ENCODE measurements at regions of chr9 and their contacts with region 1.

Region 1: DNA sequence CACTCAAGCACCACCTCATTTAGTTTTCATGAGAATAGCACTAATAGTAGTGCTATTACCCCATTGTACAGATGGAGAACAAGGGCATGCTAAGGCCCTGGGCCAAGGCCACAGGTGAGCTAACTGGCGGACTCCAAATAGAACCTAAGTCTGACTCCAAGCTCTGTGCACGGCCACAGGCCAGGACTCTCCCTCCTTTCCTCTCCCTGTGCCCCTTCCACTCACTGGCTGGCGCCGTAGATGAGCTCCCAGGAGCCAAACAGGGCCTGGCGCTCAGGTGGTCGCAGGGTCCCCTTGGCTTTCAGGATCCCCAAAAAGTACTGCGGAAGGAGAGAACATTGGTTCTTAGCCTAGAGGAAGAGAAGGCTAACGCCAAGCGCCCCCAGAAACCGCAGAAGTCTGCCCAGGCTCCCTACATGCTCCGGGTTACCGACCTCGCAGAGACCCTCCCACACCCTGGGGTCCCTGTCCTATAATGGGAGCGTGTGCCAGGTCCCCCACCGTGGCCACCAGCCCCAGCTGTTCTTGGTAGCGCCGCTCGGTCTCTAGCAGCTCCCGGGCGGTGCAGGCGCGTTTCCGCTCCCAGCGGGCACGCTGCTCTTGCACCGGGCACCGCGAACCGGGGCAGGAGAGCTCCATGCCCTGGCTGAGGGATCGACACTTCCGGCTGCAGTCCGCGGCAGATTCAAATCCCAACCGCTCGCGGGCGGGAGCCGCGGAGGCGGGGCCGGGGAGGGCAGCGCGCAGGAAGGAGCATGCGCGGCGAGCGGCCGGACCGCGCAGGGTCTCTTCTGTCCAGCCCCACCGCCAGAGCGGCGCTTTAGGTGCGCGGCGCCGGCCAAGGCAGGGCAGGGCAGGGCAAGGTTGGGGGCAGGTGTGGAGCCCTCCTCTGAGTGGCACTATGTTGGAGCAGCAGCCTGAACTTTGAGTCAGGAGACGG is at the start of gene ARHGEF39:
- DNase-seq: peak; percentile 84 to 93 (median 93)
- ATAC-seq: peak; percentile 86 to 88
- H3K4me3 ChIP-seq: peak within 1 kb of the TSS; percentile 48
- H3K27ac ChIP-seq: peak within 1 kb of the TSS; percentile 29
- H3K4me1 ChIP-seq: no peaks in the 10 kb centered on the region
- H3K27me3 ChIP-seq: no peaks in the 10 kb centered on the region
- total RNA-seq, gene ARHGEF39: 0.29 to 0.50 (median 0.34) TPM in 3 of 4 donors, not detected in the other

Region 2: DNA sequence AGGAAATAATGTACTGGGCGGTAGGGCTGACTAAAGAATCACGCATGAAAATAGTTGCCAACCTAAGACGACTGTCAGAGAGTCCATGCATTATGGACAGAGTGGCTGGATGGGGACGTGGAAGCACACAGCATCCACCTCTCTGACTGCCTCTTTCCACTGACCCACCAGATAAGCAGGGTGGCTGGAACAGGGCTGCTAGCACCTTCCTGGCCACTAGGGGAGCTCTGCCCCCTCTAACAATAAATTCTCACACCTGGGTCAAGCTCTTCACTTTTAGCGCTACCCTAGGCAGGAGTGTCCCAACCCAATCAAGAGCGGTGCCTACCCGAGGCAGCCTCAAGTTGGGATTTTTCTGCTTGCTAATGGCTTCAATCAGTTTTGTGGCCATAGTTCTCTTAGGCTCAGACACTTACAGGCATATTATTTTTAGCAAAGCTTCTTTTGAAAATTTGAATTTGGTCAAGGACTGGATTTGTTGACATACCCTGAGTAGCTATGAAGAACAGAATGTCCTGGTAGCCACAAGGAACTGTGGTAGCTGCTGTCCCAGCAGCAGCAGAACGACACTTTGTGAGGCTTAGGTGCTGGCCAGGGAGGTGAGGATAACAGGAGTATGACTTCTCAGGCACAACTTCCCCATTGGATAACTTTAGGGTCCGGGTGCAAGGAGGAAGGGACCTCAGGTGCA is 31.9 kb after region 1 on chr9:
- intact Hi-C with region 1: loop called in 1 of 4 experiments (anchors 5 kb)
- DNase-seq: peak; percentile 61 to 81 (median 77)
- ATAC-seq: peak; percentile 68 to 71
- H3K4me3 ChIP-seq: no peak overlapping the region
- H3K27ac ChIP-seq: peak overlapping the region; percentile 6
- H3K4me1 ChIP-seq: no peaks in the 10 kb centered on the region
- H3K27me3 ChIP-seq: no peaks in the 10 kb centered on the region